H1 (cell line): ENCODE measurements at regions of chr16 and their contacts with region 1.

Region 1: GRCh38 chr16:17970816-17971331 is 365.7 kb downstream of the NPIPA8 start:
- DNase-seq: no peak
- H3K4me3 ChIP-seq: no peak overlapping the region
- H3K27ac ChIP-seq: no peak overlapping the region
- H3K4me1 ChIP-seq: no peaks in the 10 kb centered on the region; a peak in 1 of 7 replicates
- H3K27me3 ChIP-seq: no peaks in the 10 kb centered on the region
- CTCF ChIP-seq: peak in 2 of 3 experiments; percentile 43 to 63; a peak in 3 of 4 replicates
- EP300 ChIP-seq: no peak
- POLR2A ChIP-seq: no peak
- RAD21 ChIP-seq: peak; percentile 58 to 71

Region 2: DNA sequence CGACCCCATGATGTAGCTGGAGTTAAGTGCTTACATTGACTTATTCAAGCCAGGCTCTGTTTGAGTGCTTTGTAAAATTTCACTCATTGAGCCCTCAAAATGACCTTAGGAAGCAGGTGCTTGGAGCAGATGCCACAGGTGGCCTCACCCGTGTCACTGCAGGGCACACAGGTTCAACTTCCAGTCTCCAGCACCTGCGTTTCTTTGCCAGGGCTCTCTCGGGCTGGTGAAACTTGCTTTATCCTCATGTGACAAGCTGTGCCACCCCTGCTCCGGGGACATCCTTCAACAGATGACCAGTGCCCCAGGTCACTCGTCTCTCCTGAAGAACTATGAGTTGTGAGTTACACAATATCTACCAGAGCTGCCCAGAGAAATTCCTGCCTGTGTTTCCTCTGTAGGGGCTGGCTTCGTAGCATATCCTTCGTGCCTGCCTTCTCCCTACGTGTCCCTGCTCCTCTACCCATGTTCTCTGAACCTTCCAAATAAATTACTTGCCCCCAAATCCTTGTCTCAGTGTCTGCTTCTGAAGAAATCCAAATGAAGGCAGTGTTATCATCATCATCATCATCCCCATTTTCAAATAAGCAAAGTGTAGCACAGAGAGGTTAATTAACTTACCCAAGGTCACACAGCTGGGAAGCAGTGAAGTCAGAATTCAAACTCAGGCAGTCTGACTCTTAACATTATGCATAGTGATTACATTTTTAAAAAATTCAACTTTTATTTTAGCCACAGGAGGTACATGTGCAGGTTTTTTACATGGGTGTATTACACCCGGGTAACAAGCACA is 13.2 kb after region 1 on chr16:
- CTCF ChIA-PET with region 1: interaction called, 12 read pairs
- POLR2A ChIA-PET with region 1: interaction called, 4 read pairs
- DNase-seq: no peak
- H3K4me3 ChIP-seq: no peak overlapping the region
- H3K27ac ChIP-seq: no peak overlapping the region
- H3K4me1 ChIP-seq: no peaks in the 10 kb centered on the region
- H3K27me3 ChIP-seq: no peaks in the 10 kb centered on the region
- CTCF ChIP-seq: no peak
- EP300 ChIP-seq: no peak
- POLR2A ChIP-seq: no peak
- RAD21 ChIP-seq: no peak

Region 3: DNA sequence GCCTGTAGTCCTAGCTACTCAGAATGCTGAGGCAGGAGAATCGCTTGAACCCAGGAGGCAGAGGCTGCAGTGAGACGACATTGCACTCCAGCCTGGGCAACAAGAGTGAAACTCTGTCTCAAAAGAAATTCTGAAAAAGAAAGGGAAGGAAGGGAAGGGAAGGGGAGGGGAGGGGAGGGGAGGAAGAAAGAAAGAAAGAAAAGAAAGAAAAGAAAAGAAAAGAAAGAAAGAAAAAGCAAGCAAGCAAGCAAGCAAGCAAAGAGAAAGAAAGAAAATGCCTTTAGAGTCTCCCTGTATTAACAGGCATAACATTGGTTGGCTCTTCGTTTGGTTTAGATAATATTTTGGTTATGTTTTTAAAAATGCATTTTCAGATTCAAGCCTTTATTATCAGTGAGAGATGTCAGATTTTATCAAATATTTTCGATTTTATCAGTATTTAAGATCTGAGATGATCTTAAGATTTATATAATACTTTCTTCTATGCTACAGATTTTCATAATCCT is 84.6 kb after region 1 on chr16:
- CTCF ChIA-PET with region 1: no interaction called
- POLR2A ChIA-PET with region 1: no interaction called
- DNase-seq: no peak
- H3K4me3 ChIP-seq: no peak overlapping the region
- H3K27ac ChIP-seq: no peak overlapping the region
- H3K4me1 ChIP-seq: no peaks in the 10 kb centered on the region
- H3K27me3 ChIP-seq: no peaks in the 10 kb centered on the region
- CTCF ChIP-seq: no peak
- EP300 ChIP-seq: no peak
- POLR2A ChIP-seq: no peak
- RAD21 ChIP-seq: no peak